CD8-positive, alpha-beta T cell (primary cell): ENCODE measurements at regions of chr12 and their contacts with region 1.

Region 1: DNA sequence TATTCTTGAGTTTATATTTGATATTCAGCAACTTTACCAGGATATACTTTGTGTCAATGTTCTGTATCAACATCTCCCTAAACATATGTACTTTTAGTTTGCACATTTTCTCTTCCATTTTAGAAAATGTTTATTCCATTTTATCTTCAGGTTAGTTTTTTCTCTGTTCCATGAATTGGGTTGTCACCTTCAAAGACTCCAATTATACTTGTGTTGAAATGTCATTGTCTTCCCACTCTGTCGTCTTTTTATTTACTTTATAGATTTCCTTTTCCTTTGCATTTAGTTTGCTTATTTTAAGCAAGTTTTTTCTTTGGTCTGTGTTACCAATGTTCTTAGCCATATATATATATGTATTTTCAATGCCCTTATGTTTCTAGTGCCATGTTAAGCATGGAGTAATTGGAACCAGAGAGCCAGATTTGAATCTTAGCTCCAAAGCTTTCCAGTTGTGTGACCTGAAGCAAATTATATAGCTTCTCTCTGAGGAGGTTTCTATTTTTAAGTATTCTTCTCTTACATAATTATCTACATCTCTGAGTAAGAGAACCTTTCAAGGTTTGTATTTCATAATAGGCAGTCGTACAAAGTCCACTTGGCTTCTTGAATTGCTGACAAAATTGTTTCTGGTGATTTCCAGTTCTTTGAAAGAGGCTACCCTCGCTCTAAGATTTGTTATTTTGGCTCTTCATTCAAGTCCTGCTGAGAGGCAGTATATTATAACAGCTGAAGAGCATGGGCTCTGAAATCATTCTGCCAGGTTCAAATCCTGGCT is 85.8 kb upstream of the DYRK2 start:
- DNase-seq: no peak
- ATAC-seq: no peak
- H3K4me3 ChIP-seq: no peak overlapping the region
- H3K4me3 Mint-ChIP-seq: no peak overlapping the region
- H3K27ac ChIP-seq: no peak overlapping the region
- H3K27ac Mint-ChIP-seq: no peak overlapping the region
- H3K4me1 ChIP-seq: no peaks in the 10 kb centered on the region
- H3K4me1 Mint-ChIP-seq: peaks cover 7% of the 10 kb centered on the region
- H3K27me3 ChIP-seq: no peaks in the 10 kb centered on the region
- H3K27me3 Mint-ChIP-seq: no peaks in the 10 kb centered on the region
- CTCF ChIP-seq: no peak

Region 2: DNA sequence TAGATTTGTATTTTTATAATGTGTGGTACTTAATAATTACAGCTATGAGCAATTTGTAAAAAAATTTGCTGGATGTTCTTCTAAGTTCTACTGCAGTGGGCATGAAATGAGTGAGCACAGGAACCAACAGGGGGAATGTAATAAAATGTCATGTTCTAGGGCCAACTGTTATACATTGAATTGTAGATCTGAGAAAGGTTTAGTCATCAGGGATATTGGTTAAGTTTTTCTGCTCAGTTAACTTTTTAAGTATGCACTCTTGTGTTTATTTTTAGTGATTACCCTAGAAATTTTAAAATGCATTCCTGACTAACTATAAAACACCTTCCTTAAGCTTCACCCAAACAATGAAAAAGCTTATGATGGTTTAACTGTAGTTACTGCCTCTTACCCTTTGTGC is 191.7 kb before region 1 on chr12:
- CTCF ChIA-PET with region 1: no interaction called
- POLR2A ChIA-PET with region 1: no interaction called
- intact Hi-C with region 1: no loop called
- DNase-seq: no peak
- ATAC-seq: no peak
- H3K4me3 ChIP-seq: no peak overlapping the region
- H3K4me3 Mint-ChIP-seq: no peak overlapping the region
- H3K27ac ChIP-seq: no peak overlapping the region
- H3K27ac Mint-ChIP-seq: no peak overlapping the region
- H3K4me1 ChIP-seq: no peaks in the 10 kb centered on the region
- H3K4me1 Mint-ChIP-seq: no peaks in the 10 kb centered on the region
- H3K27me3 ChIP-seq: no peaks in the 10 kb centered on the region
- H3K27me3 Mint-ChIP-seq: no peaks in the 10 kb centered on the region
- CTCF ChIP-seq: no peak

Region 3: DNA sequence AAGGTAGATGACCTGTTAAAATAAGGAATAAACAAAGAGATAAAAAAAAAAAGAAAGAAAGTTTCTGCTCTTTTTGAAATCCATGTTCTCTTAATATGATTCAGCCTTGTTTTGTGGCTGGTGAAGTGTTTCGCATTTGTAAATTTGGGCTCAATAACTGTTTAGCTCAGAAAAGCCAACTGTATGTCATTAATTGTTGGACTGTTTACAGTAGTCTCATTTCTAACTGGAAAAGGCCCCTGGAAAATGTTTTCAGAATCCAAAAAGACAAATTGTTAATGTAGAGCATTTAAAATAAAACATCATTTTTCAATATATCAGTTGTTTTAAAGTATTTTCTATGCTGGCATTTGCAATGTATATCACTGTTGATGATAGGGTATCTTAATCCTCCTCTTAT is 38.4 kb after region 1 on chr12:
- CTCF ChIA-PET with region 1: no interaction called
- POLR2A ChIA-PET with region 1: no interaction called
- intact Hi-C with region 1: loop called in 1 of 2 experiments (anchors 5 kb)
- DNase-seq: no peak
- ATAC-seq: no peak
- H3K4me3 ChIP-seq: no peak overlapping the region
- H3K4me3 Mint-ChIP-seq: no peak overlapping the region
- H3K27ac ChIP-seq: no peak overlapping the region
- H3K27ac Mint-ChIP-seq: no peak overlapping the region
- H3K4me1 ChIP-seq: no peaks in the 10 kb centered on the region
- H3K4me1 Mint-ChIP-seq: peaks cover 8% of the 10 kb centered on the region
- H3K27me3 ChIP-seq: no peaks in the 10 kb centered on the region
- H3K27me3 Mint-ChIP-seq: no peaks in the 10 kb centered on the region
- CTCF ChIP-seq: no peak